MCF 10A (cell line): ENCODE measurements at regions of chr22 and their contacts with region 1.

Region 1: DNA sequence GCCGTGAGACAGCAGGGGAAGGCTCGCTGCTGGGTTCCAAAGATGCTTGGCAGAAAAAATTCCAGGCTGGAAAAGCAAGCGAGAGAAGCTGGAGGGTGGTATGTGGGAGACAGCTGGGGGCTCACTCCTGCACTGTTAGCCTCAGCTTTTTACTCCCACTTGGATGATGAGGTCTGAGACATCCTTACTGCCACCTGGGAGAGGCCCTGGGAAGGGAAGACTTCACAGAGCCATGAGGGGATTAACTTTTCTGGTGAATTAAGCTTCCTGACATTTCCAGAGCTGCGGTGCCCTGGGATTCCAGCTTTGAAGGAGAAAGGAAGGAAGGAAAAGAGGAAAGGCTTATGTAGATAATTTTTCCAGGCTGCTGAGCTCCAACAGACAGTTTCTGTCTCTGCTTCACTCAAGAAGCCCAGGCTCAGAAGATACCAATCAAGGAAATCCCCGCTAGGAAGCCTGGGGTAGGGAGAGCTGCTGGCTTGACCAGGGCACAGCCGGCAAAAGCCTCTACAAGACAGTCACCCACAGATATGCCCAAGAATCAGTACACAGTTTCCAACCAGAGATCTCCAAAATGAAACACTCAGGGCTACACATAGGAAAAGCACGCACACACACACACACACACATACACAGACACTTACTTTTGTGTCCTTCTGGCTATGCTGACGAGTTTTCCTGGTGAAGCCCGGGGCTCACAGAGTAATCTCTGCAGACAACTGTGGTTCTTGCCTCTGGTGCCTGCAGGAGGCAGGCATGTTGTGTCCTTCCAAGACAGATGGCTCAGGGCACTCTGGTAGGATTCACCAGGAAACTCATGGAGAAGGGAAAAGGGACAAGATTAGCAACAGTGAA is 907 bp downstream of the MCHR1 start:
- DNase-seq: no peak
- H3K4me3 Mint-ChIP-seq: no peak overlapping the region
- H3K27ac Mint-ChIP-seq: no peak overlapping the region
- H3K4me1 Mint-ChIP-seq: peaks cover 12% of the 10 kb centered on the region
- H3K27me3 Mint-ChIP-seq: no peaks in the 10 kb centered on the region
- CTCF ChIP-seq: no peak

Region 2: GRCh38 chr22:39900306-39901227 is 779.6 kb before region 1 on chr22 and contains the start of gene GRAP2:
- CTCF ChIA-PET with region 1: no interaction called
- POLR2A ChIA-PET with region 1: no interaction called
- intact Hi-C with region 1: no loop called
- DNase-seq: no peak
- H3K4me3 Mint-ChIP-seq: no peak within 1 kb of the TSS
- H3K27ac Mint-ChIP-seq: no peak within 1 kb of the TSS
- H3K4me1 Mint-ChIP-seq: no peaks in the 10 kb centered on the region
- H3K27me3 Mint-ChIP-seq: peaks cover 17% of the 10 kb centered on the region
- CTCF ChIP-seq: no peak
- total RNA-seq, gene GRAP2: 0.12 TPM in 1 of 2 replicates, not detected in the other

Region 3: DNA sequence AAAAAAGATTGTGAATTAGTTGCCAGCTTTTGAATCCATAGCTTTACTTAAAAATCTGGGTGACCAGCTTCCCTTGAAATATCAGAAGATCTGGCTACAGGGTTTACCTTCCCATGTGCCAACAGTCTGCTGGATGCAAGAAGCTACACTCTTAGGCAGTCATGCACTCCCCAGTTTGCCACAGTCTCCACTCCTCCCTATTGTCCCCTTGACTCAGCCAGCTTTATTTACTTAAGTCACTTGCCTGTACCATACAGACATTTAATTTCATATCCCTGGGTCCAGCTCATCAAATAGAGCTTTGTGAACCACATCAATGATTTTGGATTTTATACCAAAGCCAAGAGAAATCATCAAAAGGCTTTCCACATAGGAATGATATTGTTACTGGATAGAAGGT is 11.3 kb after region 1 on chr22:
- CTCF ChIA-PET with region 1: interaction called, 11 read pairs
- POLR2A ChIA-PET with region 1: interaction called, 6 read pairs
- intact Hi-C with region 1: no loop called
- DNase-seq: no peak
- H3K4me3 Mint-ChIP-seq: no peak overlapping the region
- H3K27ac Mint-ChIP-seq: no peak overlapping the region
- H3K4me1 Mint-ChIP-seq: peaks cover 6% of the 10 kb centered on the region
- H3K27me3 Mint-ChIP-seq: no peaks in the 10 kb centered on the region
- CTCF ChIP-seq: no peak

Region 4: DNA sequence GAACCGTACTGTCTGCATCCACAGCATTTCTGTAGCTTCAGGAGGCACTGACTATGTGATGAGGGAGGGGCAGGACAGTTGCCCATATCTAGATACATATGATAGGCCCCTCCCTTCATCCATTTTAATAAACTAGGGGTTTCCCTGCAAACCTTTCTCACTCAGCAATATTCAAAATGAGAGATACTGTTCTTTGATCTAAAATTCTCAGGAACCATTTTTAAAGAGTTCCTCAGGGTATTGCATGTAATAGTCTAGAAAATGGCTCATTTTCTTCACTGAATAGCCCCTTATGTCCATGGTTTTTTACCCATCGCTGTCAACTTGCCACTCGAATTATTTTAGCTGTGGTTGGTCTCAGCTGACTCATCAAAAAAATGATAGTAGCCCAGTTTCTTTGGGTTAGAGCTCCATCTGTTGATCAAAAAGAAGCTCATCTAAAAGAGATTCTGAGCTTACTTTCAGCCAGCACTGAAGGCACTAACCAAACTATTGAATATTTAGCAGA is 218.7 kb after region 1 on chr22:
- CTCF ChIA-PET with region 1: interaction called, 12 read pairs
- POLR2A ChIA-PET with region 1: no interaction called
- intact Hi-C with region 1: loop called (anchors 2 kb)
- DNase-seq: peak; percentile 53
- H3K4me3 Mint-ChIP-seq: no peak overlapping the region
- H3K27ac Mint-ChIP-seq: no peak overlapping the region
- H3K4me1 Mint-ChIP-seq: peaks cover 6% of the 10 kb centered on the region
- H3K27me3 Mint-ChIP-seq: no peaks in the 10 kb centered on the region
- CTCF ChIP-seq: peak; percentile 50